ENCODE measurements at regions of chr21 and their contacts with region 1.

Region 1: GRCh38 chr21:28639737-28640136 is 352.9 kb downstream of the LTN1 start:
- DNase-seq: no peak
- ATAC-seq: peak in 1 of 8 donors; percentile 39
- H3K4me3 ChIP-seq: no peak overlapping the region
- H3K27ac ChIP-seq: no peak overlapping the region
- H3K4me1 ChIP-seq: peaks cover 0 to 26% (median 4%) of the 10 kb centered on the region in 9 donors
- H3K27me3 ChIP-seq: no peaks in the 10 kb centered on the region
- CTCF ChIP-seq: no peak

Region 2: GRCh38 chr21:26691416-26691815 is 1948.3 kb before region 1 on chr21:
- intact Hi-C with region 1: loop called in 1 of 10 experiments (anchors 5 kb)
- DNase-seq: no peak
- ATAC-seq: no peak
- H3K4me3 ChIP-seq: no peak overlapping the region
- H3K27ac ChIP-seq: no peak overlapping the region
- H3K4me1 ChIP-seq: no peaks in the 10 kb centered on the region
- H3K27me3 ChIP-seq: peaks cover 0 to 7% (median 0%) of the 10 kb centered on the region in 7 donors
- CTCF ChIP-seq: no peak

Region 3: GRCh38 chr21:30129246-30129645 is 1489.5 kb after region 1 on chr21:
- intact Hi-C with region 1: no loop called
- DNase-seq: no peak
- ATAC-seq: no peak
- H3K4me3 ChIP-seq: no peak overlapping the region
- H3K27ac ChIP-seq: no peak overlapping the region
- H3K4me1 ChIP-seq: no peaks in the 10 kb centered on the region
- H3K27me3 ChIP-seq: no peaks in the 10 kb centered on the region
- CTCF ChIP-seq: no peak

Measured in heart right ventricle (tissue), 16 donors.